T-cell (primary cell): ENCODE measurements at regions of chr1 and their contacts with region 1.

Region 1: DNA sequence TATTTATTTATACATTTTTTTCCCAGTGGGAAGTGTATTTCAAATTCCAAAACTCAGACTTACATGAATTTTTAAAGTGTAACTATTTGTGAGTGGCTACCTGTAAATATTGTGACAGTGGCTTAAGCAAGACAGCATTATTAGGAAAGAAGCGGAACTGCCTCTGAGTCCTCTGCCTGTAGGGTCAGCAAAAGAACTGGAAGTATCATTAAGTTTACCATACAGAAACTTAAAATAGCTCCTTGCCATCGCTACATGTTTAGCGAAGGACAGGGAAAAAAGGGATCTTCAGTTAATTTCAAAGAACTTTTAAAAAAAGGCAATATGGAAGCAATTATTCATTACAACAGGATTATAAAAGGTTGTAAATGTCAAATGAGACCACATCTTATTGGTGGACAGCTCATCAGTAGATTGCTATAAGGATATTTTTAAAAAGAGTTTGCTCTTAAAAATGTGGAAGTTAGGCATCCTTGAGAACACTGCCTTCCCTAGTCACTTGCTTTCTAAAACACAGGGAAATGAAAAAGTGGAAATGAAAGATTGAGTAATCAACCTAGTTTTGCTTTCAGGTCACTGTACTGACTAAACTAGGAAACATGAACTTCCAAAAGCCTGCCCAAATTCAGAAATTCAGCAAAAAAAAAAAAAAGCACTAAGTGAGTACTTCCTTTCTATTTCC is 39.2 kb downstream of the NSL1 start:
- DNase-seq: no peak
- ATAC-seq: no peak
- H3K4me3 ChIP-seq: no peak overlapping the region
- H3K4me3 Mint-ChIP-seq: peak overlapping the region; percentile 48 to 58 (median 54)
- H3K27ac ChIP-seq: peak overlapping the region; percentile 40
- H3K27ac Mint-ChIP-seq: peak overlapping the region; percentile 79 to 90
- H3K4me1 ChIP-seq: peaks cover 21 to 37% of the 10 kb centered on the region in 2 experiments
- H3K4me1 Mint-ChIP-seq: peaks cover 44 to 49% (median 48%) of the 10 kb centered on the region in 3 donors
- H3K27me3 ChIP-seq: no peaks in the 10 kb centered on the region
- H3K27me3 Mint-ChIP-seq: no peaks in the 10 kb centered on the region

Region 2: DNA sequence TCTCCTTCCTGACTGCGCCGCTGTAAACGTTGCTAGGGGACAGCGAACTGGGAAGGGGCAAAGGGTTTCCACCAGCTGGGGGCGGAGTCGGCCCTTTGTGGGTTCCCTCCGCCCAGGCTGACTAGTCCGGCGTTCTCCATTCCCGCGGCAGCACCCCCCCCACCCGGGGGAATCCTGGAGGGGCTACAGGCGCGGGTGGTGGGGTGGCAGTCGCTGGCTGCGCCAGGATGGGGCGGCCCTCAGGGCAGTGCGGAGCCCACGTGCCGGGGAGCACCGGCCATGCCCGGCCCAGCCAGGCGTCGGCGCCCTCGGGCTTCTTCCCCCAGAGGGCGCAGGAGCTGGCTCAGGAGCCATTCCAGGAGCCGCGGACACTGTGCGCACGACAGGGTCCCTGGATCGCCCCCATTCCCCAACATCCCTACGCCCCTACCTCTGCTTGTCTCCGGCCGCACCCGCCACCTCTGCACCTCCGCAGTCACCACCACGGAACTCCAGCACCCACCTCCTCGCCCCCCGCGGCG is 53.2 kb before region 1 on chr1:
- CTCF ChIA-PET with region 1: interaction called, 4 to 10 read pairs
- POLR2A ChIA-PET with region 1: no interaction called
- DNase-seq: peak in 25 of 35 experiments; percentile 5 to 69 (median 25)
- ATAC-seq: peak; percentile 57 to 71 (median 66)
- H3K4me3 ChIP-seq: peak overlapping the region; percentile 55 to 61
- H3K4me3 Mint-ChIP-seq: peak overlapping the region; percentile 78 to 83 (median 80)
- H3K27ac ChIP-seq: no peak overlapping the region
- H3K27ac Mint-ChIP-seq: peak overlapping the region in 1 of 2 donors; percentile 66
- H3K4me1 ChIP-seq: peaks cover 13 to 37% of the 10 kb centered on the region in 2 experiments
- H3K4me1 Mint-ChIP-seq: peaks cover 37 to 59% (median 54%) of the 10 kb centered on the region in 3 donors
- H3K27me3 ChIP-seq: peaks cover 0 to 10% of the 10 kb centered on the region in 2 experiments
- H3K27me3 Mint-ChIP-seq: peaks cover 0 to 7% of the 10 kb centered on the region in 2 donors